Endothelial cell of umbilical vein (primary cell): ENCODE measurements at regions of chr5 and their contacts with region 1.

Region 1: GRCh38 chr5:77645158-77645994 is 6.9 kb upstream of the OTP start:
- DNase-seq: no peak
- H3K4me3 ChIP-seq: no peak overlapping the region
- H3K27ac ChIP-seq: no peak overlapping the region
- H3K4me1 ChIP-seq: peaks cover 5% of the 10 kb centered on the region
- H3K27me3 ChIP-seq: peaks cover 69 to 94% of the 10 kb centered on the region in 2 experiments
- CTCF ChIP-seq: peak; percentile 51 to 63
- POLR2A ChIP-seq: no peak

Region 2: DNA sequence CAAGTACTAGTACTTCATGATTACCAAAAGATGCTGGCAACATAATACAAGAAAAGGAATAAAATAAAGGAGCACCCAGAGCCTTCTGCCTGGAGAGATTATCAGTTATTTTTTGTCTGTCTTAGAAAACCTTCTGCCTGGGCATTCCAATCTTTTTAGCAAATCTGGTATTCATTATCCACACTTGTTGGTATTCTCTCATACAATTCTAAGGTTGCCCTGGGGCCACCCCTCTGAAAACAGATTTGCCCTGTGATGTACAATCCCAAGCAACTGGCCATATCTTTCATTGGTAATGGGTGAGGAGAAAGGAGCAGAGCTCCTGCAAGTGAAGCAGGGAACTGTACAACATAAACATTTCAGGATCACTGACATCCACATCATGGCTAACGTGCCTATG is 201.0 kb before region 1 on chr5:
- CTCF ChIA-PET with region 1: no interaction called
- POLR2A ChIA-PET with region 1: no interaction called
- dilution Hi-C with region 1: no loop called
- intact Hi-C with region 1: no loop called
- DNase-seq: no peak
- H3K4me3 ChIP-seq: no peak overlapping the region
- H3K27ac ChIP-seq: no peak overlapping the region
- H3K4me1 ChIP-seq: no peaks in the 10 kb centered on the region
- H3K27me3 ChIP-seq: no peaks in the 10 kb centered on the region
- CTCF ChIP-seq: no peak
- POLR2A ChIP-seq: no peak

Region 3: DNA sequence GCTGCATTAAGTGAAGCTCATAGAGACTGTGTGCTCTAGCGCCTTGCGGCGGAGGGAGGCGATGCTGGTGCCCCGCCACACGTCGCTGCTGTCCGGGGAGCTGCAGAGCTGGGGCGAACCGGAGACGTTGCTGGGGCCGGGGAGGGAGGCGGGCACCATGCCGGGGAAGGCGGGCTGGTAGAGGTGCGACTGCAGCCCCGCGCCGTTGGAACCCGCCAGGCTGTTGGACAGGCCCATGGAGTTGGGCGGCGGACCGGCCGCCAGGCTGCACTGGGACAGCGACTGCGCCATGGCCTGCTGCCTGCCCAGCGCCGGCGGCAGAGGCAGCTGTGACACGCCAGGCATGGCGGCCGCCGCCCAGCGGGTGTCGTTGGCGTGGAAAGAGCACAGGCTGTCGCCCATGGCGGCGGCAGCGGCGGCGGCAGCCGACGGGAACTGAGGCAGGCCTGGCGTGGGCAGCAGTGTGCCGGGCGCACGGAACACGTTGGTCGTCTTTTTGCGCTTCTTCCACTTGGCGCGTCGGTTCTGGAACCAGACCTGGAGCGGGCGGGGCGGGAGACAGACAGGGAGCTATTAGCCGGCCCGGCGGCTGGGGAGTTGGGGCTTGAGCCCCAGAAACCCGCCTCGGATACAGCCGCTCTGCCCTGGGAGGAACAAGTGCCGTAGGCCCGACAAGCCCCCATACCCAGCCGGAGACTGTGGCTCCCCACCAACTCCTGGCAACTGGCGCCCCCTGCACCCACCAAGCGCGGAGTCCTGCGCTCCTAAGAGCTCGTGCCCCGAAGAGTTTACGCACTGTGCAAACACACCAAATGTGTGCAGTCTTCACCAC is 14.9 kb before region 1 on chr5:
- CTCF ChIA-PET with region 1: interaction called, 3 read pairs
- POLR2A ChIA-PET with region 1: no interaction called
- dilution Hi-C with region 1: no loop called
- intact Hi-C with region 1: loop called (anchors 2 kb)
- DNase-seq: no peak
- H3K4me3 ChIP-seq: peak overlapping the region in 1 of 3 experiments; percentile 14
- H3K27ac ChIP-seq: no peak overlapping the region
- H3K4me1 ChIP-seq: peaks cover 5% of the 10 kb centered on the region
- H3K27me3 ChIP-seq: peaks cover 61 to 100% of the 10 kb centered on the region in 2 experiments
- CTCF ChIP-seq: peak in 1 of 2 donors; percentile 6
- POLR2A ChIP-seq: no peak

Region 4: GRCh38 chr5:77893225-77893860 is 248.0 kb after region 1 on chr5:
- CTCF ChIA-PET with region 1: no interaction called
- POLR2A ChIA-PET with region 1: no interaction called
- dilution Hi-C with region 1: no loop called
- intact Hi-C with region 1: no loop called
- DNase-seq: peak; percentile 87
- H3K4me3 ChIP-seq: no peak overlapping the region
- H3K27ac ChIP-seq: peak overlapping the region; percentile 21
- H3K4me1 ChIP-seq: peaks cover 3% of the 10 kb centered on the region
- H3K27me3 ChIP-seq: no peaks in the 10 kb centered on the region
- CTCF ChIP-seq: no peak
- POLR2A ChIP-seq: no peak

Region 5: DNA sequence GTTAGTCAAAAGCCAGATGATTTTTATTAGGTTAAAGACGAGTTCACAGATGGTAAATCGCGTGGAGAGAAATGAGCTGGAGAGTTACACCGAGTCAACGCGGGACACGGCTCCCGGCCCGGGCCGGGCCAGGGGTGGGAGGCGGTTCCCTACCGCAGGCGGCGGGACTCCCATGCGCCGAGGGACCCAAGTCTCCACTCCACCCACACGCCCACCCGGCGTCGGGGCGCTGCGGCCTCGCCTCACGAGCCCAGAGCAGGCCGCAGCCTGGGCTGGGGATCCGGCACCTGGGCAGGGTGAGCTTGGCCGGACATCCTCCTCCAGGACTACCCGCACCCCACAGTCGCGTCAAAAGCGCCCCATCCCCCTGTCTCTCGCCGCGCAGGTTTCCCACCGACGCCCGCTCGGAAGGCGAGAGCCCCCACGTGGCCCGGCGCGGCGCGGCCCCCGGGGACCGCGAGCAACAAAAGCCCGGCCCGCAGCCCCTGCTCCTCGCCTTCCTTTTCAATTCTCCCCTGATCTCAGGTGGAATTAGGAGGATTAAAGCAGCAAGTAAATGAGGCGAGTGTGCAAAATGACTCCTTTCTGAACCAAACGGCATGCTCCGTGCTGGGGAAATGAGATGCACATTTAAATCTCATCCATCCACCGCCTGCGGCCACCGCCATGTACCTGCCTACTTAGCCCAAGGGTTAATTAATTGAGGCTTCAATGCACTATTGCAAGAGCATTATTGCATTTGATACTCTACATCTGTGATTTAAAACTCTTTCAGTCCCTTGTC is 327.3 kb after region 1 on chr5:
- CTCF ChIA-PET with region 1: no interaction called
- POLR2A ChIA-PET with region 1: no interaction called
- dilution Hi-C with region 1: no loop called
- intact Hi-C with region 1: loop called (anchors 5 kb)
- DNase-seq: no peak
- H3K4me3 ChIP-seq: peak overlapping the region in 2 of 3 experiments; percentile 19 to 33
- H3K27ac ChIP-seq: no peak overlapping the region
- H3K4me1 ChIP-seq: peaks cover 12% of the 10 kb centered on the region
- H3K27me3 ChIP-seq: peaks cover 63 to 69% of the 10 kb centered on the region in 2 experiments
- CTCF ChIP-seq: peak; percentile 19 to 52
- POLR2A ChIP-seq: no peak

Region 6: GRCh38 chr5:78008356-78008967 is 363.1 kb after region 1 on chr5:
- CTCF ChIA-PET with region 1: interaction called, 8 read pairs
- POLR2A ChIA-PET with region 1: no interaction called
- dilution Hi-C with region 1: no loop called
- intact Hi-C with region 1: loop called (anchors 1 kb)
- DNase-seq: peak; percentile 53
- H3K4me3 ChIP-seq: no peak overlapping the region
- H3K27ac ChIP-seq: no peak overlapping the region
- H3K4me1 ChIP-seq: no peaks in the 10 kb centered on the region
- H3K27me3 ChIP-seq: no peaks in the 10 kb centered on the region
- CTCF ChIP-seq: peak; percentile 61 to 62
- POLR2A ChIP-seq: no peak

Region 7: DNA sequence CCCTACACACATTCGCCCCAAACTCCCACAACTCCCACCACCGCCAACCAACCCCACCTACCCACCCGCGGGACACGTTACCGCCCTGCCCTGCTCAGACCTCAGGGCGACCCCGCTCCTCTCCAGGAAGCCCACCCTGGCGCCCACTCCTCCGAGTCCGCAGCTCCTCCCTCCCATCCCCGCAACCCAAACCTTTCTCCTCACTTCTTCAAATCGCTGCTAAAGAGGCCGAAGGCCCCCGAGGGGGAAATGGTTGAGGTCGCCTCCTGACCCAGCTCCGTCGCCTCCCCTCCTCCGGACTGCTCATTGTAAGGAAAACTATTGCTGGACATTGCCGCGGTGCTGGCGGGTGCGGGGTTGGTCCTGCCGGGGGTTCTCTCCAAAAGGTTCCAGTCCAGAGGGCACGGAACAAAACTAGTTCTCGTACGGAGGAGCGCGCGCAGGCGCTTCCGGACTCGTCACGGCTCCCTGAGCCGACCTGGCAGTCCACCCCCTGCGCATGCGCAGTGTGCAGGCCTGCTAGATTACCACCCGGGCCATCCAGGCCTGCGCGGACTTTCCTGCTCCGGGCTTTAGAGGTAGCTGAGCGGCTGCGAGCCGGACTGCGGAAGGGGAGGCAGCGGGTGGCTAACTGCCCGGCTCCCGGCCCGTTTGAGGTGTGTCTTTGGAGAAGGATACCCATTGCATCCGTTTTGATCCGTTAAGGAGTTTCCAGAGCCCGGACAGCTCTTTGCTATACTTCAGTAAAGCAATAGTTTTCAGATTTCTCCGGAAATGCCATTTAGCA is 649.1 kb after region 1 on chr5 and contains the start of gene AP3B1:
- CTCF ChIA-PET with region 1: no interaction called
- POLR2A ChIA-PET with region 1: no interaction called
- dilution Hi-C with region 1: no loop called
- intact Hi-C with region 1: loop called (anchors 10 kb)
- DNase-seq: peak; percentile 99
- H3K4me3 ChIP-seq: peak within 1 kb of the TSS; percentile 61 to 99 (median 97)
- H3K27ac ChIP-seq: peak within 1 kb of the TSS; percentile 88
- H3K4me1 ChIP-seq: peaks cover 14% of the 10 kb centered on the region
- H3K27me3 ChIP-seq: no peaks in the 10 kb centered on the region
- CTCF ChIP-seq: no peak
- POLR2A ChIP-seq: peak; percentile 95
- total RNA-seq, gene AP3B1: 46.5 and 46.7 TPM in 2 replicates